ENCODE measurements at regions of chr9 and their contacts with region 1.

Region 1: DNA sequence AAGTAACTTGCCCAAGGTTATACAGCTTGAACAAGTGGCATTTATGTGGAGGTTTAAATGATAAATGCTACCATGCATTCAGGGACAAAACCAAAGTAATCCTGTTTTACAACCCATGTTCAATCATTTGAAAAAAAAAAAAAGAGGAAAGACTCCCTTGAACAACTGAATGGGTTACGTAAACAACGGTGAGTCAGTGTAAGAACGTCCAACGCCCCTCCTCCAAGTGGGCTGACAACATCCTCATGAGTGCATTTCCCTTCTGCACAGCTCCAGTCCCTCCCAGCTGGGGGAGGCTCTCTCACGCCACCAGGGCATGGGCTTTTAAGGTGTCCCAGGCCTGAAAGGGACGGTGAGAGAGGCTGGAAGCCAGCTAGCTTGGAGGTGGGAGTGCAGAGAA is 90.0 kb downstream of the PRRT1B start:
- DNase-seq: peak; percentile 96
- H3K4me3 ChIP-seq: no peak overlapping the region
- H3K27ac ChIP-seq: peak overlapping the region; percentile 82
- H3K4me1 ChIP-seq: peaks cover 43% of the 10 kb centered on the region
- H3K27me3 ChIP-seq: no peaks in the 10 kb centered on the region
- CTCF ChIP-seq: peak in 1 of 2 donors; percentile 21

Region 2: DNA sequence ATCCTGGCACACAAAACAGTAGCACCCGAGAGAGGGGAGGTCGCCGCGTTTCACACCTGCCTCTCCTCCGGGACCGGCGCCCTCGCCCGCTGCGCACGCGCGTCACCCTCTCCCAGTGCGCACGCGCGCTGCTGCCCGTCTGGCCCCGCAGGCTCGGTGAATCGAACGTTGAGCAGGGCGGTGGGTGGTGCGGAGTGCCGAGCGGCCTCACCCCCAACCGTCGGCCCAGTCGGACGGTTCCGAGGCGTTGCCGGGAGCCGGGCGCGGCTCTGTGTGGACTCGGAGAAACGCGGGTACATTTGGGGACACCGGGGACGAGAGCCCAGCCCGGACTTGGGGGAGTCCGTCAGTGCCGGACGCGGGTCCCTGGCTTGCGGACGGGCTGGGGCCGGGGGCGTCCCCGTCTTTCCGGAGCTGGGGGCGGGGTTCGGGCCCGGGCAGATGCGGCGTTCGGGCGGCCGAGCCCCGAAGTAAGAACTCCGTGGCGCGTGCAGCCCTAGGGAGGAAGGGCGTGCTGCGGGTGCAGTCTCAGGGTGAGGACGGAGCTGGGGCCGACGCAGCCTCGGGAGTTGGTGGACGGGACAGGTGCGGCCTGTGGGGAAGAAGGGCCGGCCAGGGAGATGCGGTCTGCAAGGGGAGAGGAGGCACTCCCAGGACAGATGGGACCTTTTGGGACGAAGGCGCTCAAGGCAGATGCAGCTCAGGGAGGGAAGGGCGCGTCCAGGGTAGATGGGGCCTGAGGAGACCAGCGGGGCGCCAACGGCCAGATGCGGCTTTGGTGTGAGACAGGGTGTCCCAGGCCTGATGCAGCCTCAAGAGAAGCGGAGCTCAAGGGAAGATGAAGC is 132.3 kb before region 1 on chr9 and contains the start of gene POMT1:
- CTCF ChIA-PET with region 1: no interaction called
- dilution Hi-C with region 1: no loop called
- in situ Hi-C with region 1: no loop called
- intact Hi-C with region 1: no loop called
- DNase-seq: peak; percentile 64
- H3K4me3 ChIP-seq: peak within 1 kb of the TSS; percentile 56 to 86 (median 84)
- H3K27ac ChIP-seq: no peak within 1 kb of the TSS
- H3K4me1 ChIP-seq: peaks cover 26% of the 10 kb centered on the region
- H3K27me3 ChIP-seq: no peaks in the 10 kb centered on the region
- CTCF ChIP-seq: no peak
- total RNA-seq, gene POMT1: 16.0 to 19.6 TPM

Region 3: DNA sequence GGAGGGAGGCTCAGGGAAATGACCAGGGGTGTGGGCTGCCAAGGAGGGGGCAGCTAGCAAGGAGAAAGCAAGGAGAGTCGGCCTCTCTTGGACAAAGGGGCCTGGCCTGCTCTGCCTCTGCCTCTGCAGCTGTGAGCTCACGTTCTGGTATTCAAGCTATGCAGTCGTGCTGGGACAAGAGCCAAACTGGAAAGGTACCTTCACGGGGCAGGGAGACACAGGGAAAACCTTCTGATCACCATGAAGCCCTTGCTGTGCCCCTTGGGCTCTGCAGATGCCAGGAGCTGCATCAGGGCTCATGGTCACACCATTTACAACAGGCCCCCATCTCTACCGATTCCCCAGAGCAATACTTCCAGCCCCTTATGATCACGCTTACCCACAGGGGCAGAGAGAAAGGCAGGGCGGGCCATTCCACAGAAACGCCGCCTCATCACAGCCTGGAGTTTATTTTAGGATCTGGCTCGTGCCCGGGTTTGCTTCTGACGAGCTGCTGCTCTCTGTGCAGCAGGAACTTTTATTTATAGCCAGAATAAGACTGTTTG is 26.7 kb before region 1 on chr9:
- CTCF ChIA-PET with region 1: no interaction called
- dilution Hi-C with region 1: no loop called
- in situ Hi-C with region 1: no loop called
- intact Hi-C with region 1: loop called (anchors 1 kb)
- DNase-seq: peak; percentile 81
- H3K4me3 ChIP-seq: peak overlapping the region in 1 of 3 experiments; percentile 11
- H3K27ac ChIP-seq: peak overlapping the region; percentile 59
- H3K4me1 ChIP-seq: peaks cover 36% of the 10 kb centered on the region
- H3K27me3 ChIP-seq: no peaks in the 10 kb centered on the region
- CTCF ChIP-seq: no peak

Region 4: GRCh38 chr9:131656356-131657036 is 21.2 kb after region 1 on chr9:
- CTCF ChIA-PET with region 1: no interaction called
- dilution Hi-C with region 1: no loop called
- in situ Hi-C with region 1: no loop called
- intact Hi-C with region 1: loop called (anchors 1 kb)
- DNase-seq: no peak
- H3K4me3 ChIP-seq: no peak overlapping the region
- H3K27ac ChIP-seq: peak overlapping the region; percentile 45
- H3K4me1 ChIP-seq: peaks cover 49% of the 10 kb centered on the region
- H3K27me3 ChIP-seq: no peaks in the 10 kb centered on the region
- CTCF ChIP-seq: no peak

Region 5: GRCh38 chr9:131707733-131708157 is 72.5 kb after region 1 on chr9:
- CTCF ChIA-PET with region 1: no interaction called
- dilution Hi-C with region 1: no loop called
- in situ Hi-C with region 1: no loop called
- intact Hi-C with region 1: loop called (anchors 2 kb)
- DNase-seq: peak; percentile 79
- H3K4me3 ChIP-seq: peak overlapping the region in 2 of 3 experiments; percentile 8 to 20
- H3K27ac ChIP-seq: peak overlapping the region; percentile 89
- H3K4me1 ChIP-seq: peaks cover 63% of the 10 kb centered on the region
- H3K27me3 ChIP-seq: no peaks in the 10 kb centered on the region
- CTCF ChIP-seq: no peak

Region 6: GRCh38 chr9:131781069-131781468 is 145.8 kb after region 1 on chr9:
- CTCF ChIA-PET with region 1: no interaction called
- dilution Hi-C with region 1: no loop called
- in situ Hi-C with region 1: no loop called
- intact Hi-C with region 1: no loop called
- DNase-seq: no peak
- H3K4me3 ChIP-seq: no peak overlapping the region
- H3K27ac ChIP-seq: no peak overlapping the region
- H3K4me1 ChIP-seq: no peaks in the 10 kb centered on the region
- H3K27me3 ChIP-seq: no peaks in the 10 kb centered on the region
- CTCF ChIP-seq: no peak

Region 7: GRCh38 chr9:132780230-132781007 is 1145.1 kb after region 1 on chr9:
- CTCF ChIA-PET with region 1: no interaction called
- dilution Hi-C with region 1: no loop called
- in situ Hi-C with region 1: no loop called
- intact Hi-C with region 1: no loop called
- DNase-seq: no peak
- H3K4me3 ChIP-seq: no peak overlapping the region
- H3K27ac ChIP-seq: no peak overlapping the region
- H3K4me1 ChIP-seq: no peaks in the 10 kb centered on the region
- H3K27me3 ChIP-seq: no peaks in the 10 kb centered on the region
- CTCF ChIP-seq: no peak

Region 8: DNA sequence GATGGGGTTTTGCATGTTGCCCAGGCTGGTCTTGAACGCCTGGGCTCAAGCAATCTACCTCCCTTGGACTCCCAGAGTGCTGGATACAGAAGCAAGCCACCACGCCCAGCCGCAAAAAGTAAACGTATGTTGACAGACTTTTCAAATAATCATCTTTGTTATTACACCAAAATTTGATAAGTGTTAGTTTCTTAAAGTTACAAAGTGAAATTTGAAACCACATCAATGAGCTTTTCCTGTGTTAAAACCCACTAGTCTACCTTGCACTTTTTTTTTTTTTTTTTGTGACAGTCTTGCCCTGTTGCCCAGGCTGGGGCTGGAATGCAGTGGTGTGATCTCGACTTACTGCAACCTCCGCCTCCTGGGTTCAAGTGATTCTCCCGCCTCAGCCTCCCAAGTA is 1273.3 kb after region 1 on chr9:
- CTCF ChIA-PET with region 1: no interaction called
- dilution Hi-C with region 1: no loop called
- in situ Hi-C with region 1: no loop called
- intact Hi-C with region 1: no loop called
- DNase-seq: no peak
- H3K4me3 ChIP-seq: no peak overlapping the region
- H3K27ac ChIP-seq: no peak overlapping the region
- H3K4me1 ChIP-seq: no peaks in the 10 kb centered on the region
- H3K27me3 ChIP-seq: no peaks in the 10 kb centered on the region
- CTCF ChIP-seq: no peak